ENCODE measurements at regions of chr6 and their contacts with region 1.

Region 1: DNA sequence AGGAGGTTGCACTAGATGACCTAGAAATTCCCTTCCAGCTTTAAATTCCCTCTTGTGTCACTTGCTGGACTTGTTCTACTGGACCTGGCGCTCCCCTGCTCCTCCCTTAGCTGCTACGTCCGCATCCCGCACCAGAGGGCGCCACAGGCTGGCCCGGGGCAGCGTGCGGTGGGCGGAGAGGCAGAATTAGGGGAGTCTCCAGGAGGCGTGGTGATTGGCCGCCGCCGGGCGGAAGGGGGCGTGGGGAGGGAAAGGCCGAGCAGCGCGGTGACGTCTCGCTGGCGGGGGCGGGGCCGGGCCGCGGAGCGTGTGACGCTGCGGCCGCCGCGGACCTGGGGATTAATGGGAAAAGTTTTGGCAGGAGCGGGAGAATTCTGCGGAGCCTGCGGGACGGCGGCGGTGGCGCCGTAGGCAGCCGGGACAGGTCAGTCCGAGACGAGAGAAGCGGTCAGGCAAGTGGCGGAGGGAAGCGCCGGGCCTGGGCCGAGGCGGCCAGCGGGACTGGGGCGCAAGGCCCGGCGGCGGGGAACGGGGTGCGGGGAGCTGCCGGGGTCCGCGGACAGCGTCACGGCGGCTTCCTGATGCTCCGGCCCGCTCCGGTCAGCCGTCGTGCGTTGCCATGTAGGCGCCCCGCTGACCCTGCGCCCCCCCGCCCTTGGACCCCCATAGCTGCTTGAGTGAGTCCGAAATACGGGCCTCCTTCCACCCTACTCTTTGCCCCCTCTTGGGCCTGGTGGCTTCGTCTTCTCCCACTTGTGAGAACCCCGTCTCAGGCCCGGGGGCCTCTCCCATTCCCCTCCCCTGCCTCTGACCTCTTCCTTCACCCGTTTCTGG is at the start of gene PPARD:
- DNase-seq: peak; percentile 96
- H3K4me3 Mint-ChIP-seq: peak within 1 kb of the TSS; percentile 93
- H3K27ac Mint-ChIP-seq: peak within 1 kb of the TSS; percentile 84
- H3K4me1 Mint-ChIP-seq: peaks cover 33% of the 10 kb centered on the region
- H3K27me3 Mint-ChIP-seq: no peaks in the 10 kb centered on the region
- total RNA-seq, gene PPARD: 17.4 and 18.8 TPM in 2 replicates

Region 2: GRCh38 chr6:35297601-35298481 is 44.6 kb before region 1 on chr6 and contains the start of gene DEF6:
- intact Hi-C with region 1: loop called (anchors 1 kb)
- DNase-seq: peak; percentile 85
- H3K4me3 Mint-ChIP-seq: peak within 1 kb of the TSS; percentile 88
- H3K27ac Mint-ChIP-seq: peak within 1 kb of the TSS; percentile 98
- H3K4me1 Mint-ChIP-seq: peaks cover 48% of the 10 kb centered on the region
- H3K27me3 Mint-ChIP-seq: no peaks in the 10 kb centered on the region
- total RNA-seq, gene DEF6: 123 and 125 TPM in 2 replicates

Region 3: DNA sequence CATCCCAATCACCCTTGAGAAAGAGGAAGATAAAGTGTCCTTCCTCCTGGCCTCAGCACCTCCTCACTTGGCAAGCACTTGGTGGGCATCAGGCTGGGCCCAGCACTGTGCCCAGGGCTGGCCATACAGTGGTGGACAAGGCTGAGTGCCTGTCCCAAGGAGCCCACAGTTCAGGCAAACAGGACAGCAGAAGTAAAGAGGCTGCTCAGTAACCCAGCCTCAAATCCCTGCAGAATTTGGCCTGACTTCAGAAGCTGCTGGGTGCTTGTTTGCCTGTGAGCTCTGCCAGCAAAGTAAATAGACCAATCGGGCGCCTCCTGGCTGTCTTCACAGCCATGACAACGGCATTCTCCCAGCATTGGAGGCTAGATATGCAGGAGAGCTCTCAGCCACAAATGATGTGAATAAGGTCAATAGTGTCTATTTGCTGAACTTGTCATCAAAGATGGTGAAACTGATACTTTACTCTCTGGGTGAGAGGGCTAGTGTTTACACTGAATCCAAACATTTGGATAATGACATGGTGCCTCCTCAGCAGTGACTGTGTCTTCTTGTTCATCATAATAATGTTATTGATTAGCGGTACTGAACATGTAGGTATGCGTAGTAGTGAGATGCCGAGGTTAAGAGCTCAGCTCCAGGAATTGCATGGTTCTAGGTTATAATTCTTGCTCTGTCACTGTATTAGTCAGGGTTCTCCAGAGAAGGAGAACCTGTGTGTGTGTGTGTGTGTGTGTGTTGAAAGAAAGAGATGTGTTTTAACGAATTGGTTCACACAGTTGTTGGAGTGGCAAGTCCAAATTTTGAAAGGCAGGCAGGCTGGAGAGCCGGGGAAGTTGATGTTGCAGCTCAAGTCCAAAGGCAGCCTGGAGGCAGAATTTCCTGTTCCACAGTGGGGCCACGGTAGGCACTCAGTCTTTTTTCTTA is 72.9 kb after region 1 on chr6:
- intact Hi-C with region 1: loop called (anchors 1 kb)
- DNase-seq: peak; percentile 22
- H3K4me3 Mint-ChIP-seq: no peak overlapping the region
- H3K27ac Mint-ChIP-seq: peak overlapping the region; percentile 3
- H3K4me1 Mint-ChIP-seq: peaks cover 66% of the 10 kb centered on the region
- H3K27me3 Mint-ChIP-seq: no peaks in the 10 kb centered on the region

Region 4: GRCh38 chr6:35552285-35552917 is 209.9 kb after region 1 on chr6:
- intact Hi-C with region 1: loop called (anchors 5 kb)
- DNase-seq: peak; percentile 40
- H3K4me3 Mint-ChIP-seq: no peak overlapping the region
- H3K27ac Mint-ChIP-seq: no peak overlapping the region
- H3K4me1 Mint-ChIP-seq: no peaks in the 10 kb centered on the region
- H3K27me3 Mint-ChIP-seq: peaks cover 14% of the 10 kb centered on the region